WTC11 (cell line): ENCODE measurements at regions of chr1 and their contacts with region 1.

Region 1: GRCh38 chr1:44652445-44653106 is 21.7 kb downstream of the TMEM53 start:
- DNase-seq: peak; percentile 93
- ATAC-seq: peak; percentile 81
- H3K4me3 Mint-ChIP-seq: no peak overlapping the region
- H3K27ac Mint-ChIP-seq: peak overlapping the region; percentile 72
- H3K4me1 Mint-ChIP-seq: peaks cover 26% of the 10 kb centered on the region
- H3K27me3 Mint-ChIP-seq: no peaks in the 10 kb centered on the region
- CTCF ChIP-seq: peak; percentile 94

Region 2: GRCh38 chr1:44213222-44214112 is 439.1 kb before region 1 on chr1 and contains the start of gene DMAP1:
- CTCF ChIA-PET with region 1: interaction called, 13 read pairs
- POLR2A ChIA-PET with region 1: interaction called, 5 read pairs
- DNase-seq: peak; percentile 83
- ATAC-seq: peak; percentile 85
- H3K4me3 Mint-ChIP-seq: peak within 1 kb of the TSS; percentile 96
- H3K27ac Mint-ChIP-seq: no peak within 1 kb of the TSS
- H3K4me1 Mint-ChIP-seq: peaks cover 9% of the 10 kb centered on the region
- H3K27me3 Mint-ChIP-seq: peaks cover 18% of the 10 kb centered on the region
- CTCF ChIP-seq: no peak
- total RNA-seq, gene DMAP1: 40.9 to 44.4 TPM (median 42.3 TPM) in 3 replicates

Region 3: GRCh38 chr1:44553771-44554170 is 98.8 kb before region 1 on chr1:
- CTCF ChIA-PET with region 1: no interaction called
- POLR2A ChIA-PET with region 1: no interaction called
- DNase-seq: no peak
- ATAC-seq: no peak
- H3K4me3 Mint-ChIP-seq: no peak overlapping the region
- H3K27ac Mint-ChIP-seq: no peak overlapping the region
- H3K4me1 Mint-ChIP-seq: peaks cover 37% of the 10 kb centered on the region
- H3K27me3 Mint-ChIP-seq: no peaks in the 10 kb centered on the region
- CTCF ChIP-seq: no peak

Region 4: DNA sequence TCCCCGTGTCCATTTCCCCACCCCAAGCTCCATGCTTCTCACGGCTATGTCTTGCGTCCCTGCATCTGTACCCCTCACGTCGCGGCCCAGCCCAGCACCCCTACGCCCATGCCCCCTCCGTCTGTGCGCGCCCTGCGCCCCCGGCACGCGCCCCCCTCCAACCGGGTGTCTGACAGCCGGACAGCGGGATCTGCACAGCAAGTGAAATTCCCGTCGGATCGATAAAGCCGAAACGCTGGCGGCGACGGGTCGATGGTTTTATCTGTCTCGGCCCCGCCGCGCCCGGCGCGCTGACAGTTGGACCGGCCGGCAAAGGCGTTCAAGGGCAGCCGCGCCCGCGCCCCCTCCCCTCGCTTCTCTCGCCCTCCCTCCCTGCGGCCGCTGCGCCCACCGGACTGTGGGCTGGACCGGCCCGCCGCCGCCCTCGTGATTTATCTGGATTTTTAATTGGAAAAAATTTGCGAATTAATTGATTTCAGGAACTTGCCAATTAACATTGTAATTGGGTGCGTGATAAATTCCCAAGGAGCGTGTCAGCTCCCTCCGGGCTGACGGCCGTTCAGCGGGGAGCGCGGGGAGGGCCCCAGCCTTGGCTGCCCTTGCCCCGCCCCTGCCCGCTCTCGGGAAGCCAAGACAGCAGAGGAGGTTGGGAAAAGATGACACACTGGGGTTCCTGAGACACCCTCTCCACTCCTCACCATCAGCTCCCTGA is 35.4 kb before region 1 on chr1:
- CTCF ChIA-PET with region 1: interaction called, 112 read pairs
- POLR2A ChIA-PET with region 1: interaction called, 3 read pairs
- DNase-seq: peak; percentile 54
- ATAC-seq: peak; percentile 49
- H3K4me3 Mint-ChIP-seq: peak overlapping the region; percentile 83
- H3K27ac Mint-ChIP-seq: no peak overlapping the region
- H3K4me1 Mint-ChIP-seq: peaks cover 27% of the 10 kb centered on the region
- H3K27me3 Mint-ChIP-seq: peaks cover 10% of the 10 kb centered on the region
- CTCF ChIP-seq: no peak

Region 5: GRCh38 chr1:44636688-44637598 is 15.6 kb before region 1 on chr1:
- CTCF ChIA-PET with region 1: interaction called, 42 read pairs
- POLR2A ChIA-PET with region 1: interaction called, 10 read pairs
- DNase-seq: no peak
- ATAC-seq: no peak
- H3K4me3 Mint-ChIP-seq: no peak overlapping the region
- H3K27ac Mint-ChIP-seq: no peak overlapping the region
- H3K4me1 Mint-ChIP-seq: peaks cover 15% of the 10 kb centered on the region
- H3K27me3 Mint-ChIP-seq: no peaks in the 10 kb centered on the region
- CTCF ChIP-seq: no peak

Region 6: DNA sequence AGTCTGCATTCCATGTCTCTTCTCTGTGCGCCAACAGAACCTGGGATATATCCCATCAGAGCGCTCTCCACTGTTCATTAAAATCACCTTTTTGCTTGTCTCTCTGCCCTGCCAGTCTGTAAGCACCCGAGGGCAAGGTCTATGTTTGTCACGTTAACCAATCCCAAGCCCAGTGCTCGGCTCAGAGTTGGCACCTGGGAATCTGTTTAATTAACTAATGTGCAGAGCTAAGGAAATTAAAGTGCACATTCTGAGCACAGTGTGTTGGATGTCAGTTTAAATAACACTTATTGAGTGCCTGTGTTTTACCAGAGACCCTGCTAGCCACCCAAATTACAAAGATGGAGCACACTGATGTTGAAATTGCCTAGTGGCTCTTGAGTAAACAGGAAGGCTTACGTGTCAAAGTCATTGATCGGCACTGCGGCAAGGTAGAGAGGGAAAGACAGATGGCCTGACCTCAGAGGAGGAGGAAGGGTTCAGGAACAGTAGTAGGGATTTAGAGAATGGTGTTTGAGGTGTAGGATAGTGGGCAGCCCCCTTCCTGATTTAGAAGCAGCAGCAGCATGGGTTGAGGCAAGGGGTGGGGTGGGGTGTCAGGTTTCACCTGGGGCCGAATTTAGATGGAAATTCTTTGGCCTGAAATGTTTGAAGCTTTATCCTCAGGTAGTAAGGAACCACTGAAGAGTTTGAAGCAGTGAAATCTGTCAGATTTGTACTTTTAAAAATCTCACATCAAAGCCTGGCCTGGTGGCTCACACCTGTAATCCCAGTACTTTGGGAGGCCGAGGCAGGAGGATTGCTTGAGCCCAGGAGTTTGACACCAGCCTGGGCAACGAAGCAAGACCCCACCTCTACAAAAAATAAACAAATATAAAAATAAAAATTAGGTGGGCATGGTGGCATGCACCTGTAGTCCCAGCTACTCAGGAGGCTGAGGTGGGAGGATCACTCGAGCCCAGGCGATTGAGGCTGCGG is 29.6 kb after region 1 on chr1:
- CTCF ChIA-PET with region 1: interaction called, 42 read pairs
- POLR2A ChIA-PET with region 1: no interaction called
- DNase-seq: peak; percentile 28
- ATAC-seq: peak; percentile 90
- H3K4me3 Mint-ChIP-seq: peak overlapping the region; percentile 3; the same call in 1 of the 2 replicates
- H3K27ac Mint-ChIP-seq: peak overlapping the region; percentile 96
- H3K4me1 Mint-ChIP-seq: peaks cover 30% of the 10 kb centered on the region
- H3K27me3 Mint-ChIP-seq: no peaks in the 10 kb centered on the region
- CTCF ChIP-seq: no peak

Region 7: DNA sequence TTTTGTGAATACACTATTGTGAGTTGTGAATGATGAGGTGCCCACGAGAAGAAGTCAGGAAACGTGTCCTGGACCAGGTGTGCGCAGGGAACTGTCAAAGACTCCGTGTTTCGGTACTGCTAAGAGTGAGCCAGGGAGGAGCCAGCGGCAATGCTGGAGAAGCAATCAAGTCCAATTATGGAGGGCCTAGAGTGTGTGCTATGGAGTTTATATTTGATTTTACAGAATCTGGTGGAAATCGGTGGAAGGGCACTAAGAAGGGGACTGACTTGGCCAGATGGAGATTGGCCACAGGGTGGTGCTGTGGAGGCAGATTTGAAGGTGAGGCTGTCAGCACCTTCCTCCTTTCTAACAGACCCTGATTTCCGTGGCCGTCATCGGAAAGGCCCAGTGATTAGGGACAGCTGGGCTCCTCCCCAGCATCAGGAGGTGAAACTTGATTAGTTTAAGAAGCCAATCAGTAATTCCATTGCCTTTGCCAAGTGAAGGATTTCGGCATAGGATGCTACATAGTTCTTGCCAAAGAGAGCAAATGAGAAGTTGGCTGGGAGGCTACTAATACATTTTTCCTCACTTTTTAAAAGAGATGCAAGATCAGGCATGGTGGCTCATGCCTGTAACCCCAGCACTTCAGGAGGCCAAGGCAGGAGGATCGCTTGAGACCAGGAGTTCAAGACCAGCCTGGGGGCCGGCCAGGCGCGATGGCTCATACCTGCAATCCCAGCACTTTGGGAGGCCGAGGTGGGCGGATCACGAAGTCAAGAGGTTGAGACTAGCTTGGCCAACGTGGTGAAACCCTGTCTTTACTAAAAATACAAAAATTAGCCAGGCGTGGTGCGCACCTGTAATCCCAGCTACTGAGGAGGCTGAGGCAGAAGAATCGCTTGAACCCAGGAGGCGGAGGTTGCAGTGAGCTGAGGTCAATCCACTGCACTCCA is 183.4 kb after region 1 on chr1:
- CTCF ChIA-PET with region 1: no interaction called
- POLR2A ChIA-PET with region 1: no interaction called
- DNase-seq: peak; percentile 95
- ATAC-seq: peak; percentile 90
- H3K4me3 Mint-ChIP-seq: no peak overlapping the region
- H3K27ac Mint-ChIP-seq: peak overlapping the region; percentile 28; the same call in 1 of the 2 replicates
- H3K4me1 Mint-ChIP-seq: peaks cover 16% of the 10 kb centered on the region
- H3K27me3 Mint-ChIP-seq: no peaks in the 10 kb centered on the region; the same call in 1 of the 2 replicates
- CTCF ChIP-seq: peak; percentile 80